ENCODE measurements at regions of chr13 and their contacts with region 1.

Region 1: DNA sequence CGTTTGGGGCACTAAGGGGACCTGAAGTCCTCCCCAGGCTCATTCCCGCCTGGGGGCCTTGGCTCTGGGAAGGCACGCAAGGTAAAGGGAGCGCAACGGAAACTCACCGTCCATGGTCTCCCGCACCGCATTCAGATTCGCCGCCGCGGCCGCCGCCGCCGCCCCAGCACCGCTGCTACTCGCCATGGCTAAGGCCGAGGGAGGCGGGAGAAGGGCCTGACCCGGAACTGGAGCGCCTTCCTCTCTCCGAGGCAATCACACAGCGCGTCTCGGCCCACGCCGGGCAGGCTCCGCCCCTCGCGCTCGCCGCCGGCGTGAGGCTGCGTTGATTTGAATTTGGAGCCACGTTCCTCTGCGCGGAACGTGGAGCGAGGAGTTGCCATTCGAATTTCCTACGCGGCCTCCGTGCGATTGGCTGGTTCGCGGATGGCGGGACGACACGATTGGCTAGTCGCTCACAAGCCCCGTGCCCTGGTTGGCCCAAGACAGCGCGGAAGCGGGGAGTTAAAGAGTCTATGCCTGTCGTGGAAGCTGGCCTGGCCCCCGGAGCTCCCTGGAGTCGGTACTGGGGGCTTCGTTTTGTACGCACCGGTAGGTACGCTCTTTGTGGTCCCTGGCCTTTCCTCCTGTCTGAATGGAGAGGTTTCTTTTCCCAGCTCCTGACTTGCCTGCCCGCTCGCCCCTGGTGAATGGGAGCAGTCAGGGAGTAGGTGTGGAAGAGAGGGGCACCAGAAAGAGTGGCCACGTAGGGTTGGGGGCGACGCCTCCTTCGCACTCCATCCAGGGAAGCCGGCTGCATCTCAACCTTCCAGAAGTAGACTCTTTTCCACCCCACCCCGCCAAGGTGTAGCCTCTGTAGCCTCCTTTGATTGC is at the starts of genes BORA and MZT1:
- DNase-seq: peak; percentile 92 to 95
- H3K4me3 ChIP-seq: peak within 1 kb of the TSS; percentile 96
- H3K27ac ChIP-seq: no peak within 1 kb of the TSS
- H3K4me1 ChIP-seq: peaks cover 22% of the 10 kb centered on the region
- H3K27me3 ChIP-seq: no peaks in the 10 kb centered on the region
- CTCF ChIP-seq: no peak
- total RNA-seq, gene BORA: 12.6 and 19.5 TPM in 2 replicates
- total RNA-seq, gene MZT1: 15.2 and 21.0 TPM in 2 replicates

Region 2: DNA sequence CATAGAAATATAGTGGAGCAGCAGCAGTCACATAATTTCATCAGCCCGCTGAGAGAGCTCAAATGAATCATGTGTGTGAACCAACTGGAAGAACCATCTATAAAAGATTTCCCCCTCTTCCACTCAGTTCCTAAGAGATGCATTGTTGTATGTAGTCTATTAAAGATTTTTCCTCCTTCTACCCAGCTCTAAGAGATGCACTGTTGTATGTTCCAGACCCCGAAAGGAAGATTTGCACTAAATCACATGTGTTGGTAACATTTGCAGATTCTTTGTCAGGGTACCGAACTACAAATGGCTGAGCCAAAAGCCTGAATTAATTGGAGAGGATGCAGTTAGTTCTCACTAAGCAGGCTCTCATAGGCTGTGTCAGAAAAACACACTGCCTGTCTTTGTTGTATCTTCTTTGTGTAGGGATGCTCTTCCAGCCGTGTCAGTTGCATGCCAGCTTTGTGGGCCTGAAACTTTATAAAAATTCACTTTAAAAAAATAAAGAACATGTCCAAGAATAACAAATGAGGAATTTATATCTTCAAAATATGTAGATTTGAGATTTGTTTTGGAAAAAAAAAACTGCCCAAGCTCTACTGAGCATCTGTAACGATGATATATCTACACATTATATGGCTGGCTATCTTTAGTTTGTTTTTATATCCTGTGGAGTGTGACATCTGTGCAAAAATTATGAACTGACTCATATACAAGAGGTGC is 223.4 kb before region 1 on chr13:
- CTCF ChIA-PET with region 1: no interaction called
- POLR2A ChIA-PET with region 1: interaction called, 10 read pairs
- intact Hi-C with region 1: no loop called
- DNase-seq: no peak
- H3K4me3 ChIP-seq: no peak overlapping the region
- H3K27ac ChIP-seq: no peak overlapping the region
- H3K4me1 ChIP-seq: no peaks in the 10 kb centered on the region
- H3K27me3 ChIP-seq: no peaks in the 10 kb centered on the region
- CTCF ChIP-seq: no peak

Region 3: GRCh38 chr13:72745260-72745659 is 17.6 kb after region 1 on chr13:
- CTCF ChIA-PET with region 1: no interaction called
- POLR2A ChIA-PET with region 1: no interaction called
- intact Hi-C with region 1: no loop called
- DNase-seq: no peak
- H3K4me3 ChIP-seq: no peak overlapping the region
- H3K27ac ChIP-seq: no peak overlapping the region
- H3K4me1 ChIP-seq: no peaks in the 10 kb centered on the region
- H3K27me3 ChIP-seq: no peaks in the 10 kb centered on the region
- CTCF ChIP-seq: no peak

Region 4: GRCh38 chr13:72763411-72763810 is 35.8 kb after region 1 on chr13:
- CTCF ChIA-PET with region 1: no interaction called
- POLR2A ChIA-PET with region 1: no interaction called
- intact Hi-C with region 1: no loop called
- DNase-seq: no peak
- H3K4me3 ChIP-seq: no peak overlapping the region
- H3K27ac ChIP-seq: no peak overlapping the region
- H3K4me1 ChIP-seq: no peaks in the 10 kb centered on the region
- H3K27me3 ChIP-seq: no peaks in the 10 kb centered on the region
- CTCF ChIP-seq: no peak

Region 5: DNA sequence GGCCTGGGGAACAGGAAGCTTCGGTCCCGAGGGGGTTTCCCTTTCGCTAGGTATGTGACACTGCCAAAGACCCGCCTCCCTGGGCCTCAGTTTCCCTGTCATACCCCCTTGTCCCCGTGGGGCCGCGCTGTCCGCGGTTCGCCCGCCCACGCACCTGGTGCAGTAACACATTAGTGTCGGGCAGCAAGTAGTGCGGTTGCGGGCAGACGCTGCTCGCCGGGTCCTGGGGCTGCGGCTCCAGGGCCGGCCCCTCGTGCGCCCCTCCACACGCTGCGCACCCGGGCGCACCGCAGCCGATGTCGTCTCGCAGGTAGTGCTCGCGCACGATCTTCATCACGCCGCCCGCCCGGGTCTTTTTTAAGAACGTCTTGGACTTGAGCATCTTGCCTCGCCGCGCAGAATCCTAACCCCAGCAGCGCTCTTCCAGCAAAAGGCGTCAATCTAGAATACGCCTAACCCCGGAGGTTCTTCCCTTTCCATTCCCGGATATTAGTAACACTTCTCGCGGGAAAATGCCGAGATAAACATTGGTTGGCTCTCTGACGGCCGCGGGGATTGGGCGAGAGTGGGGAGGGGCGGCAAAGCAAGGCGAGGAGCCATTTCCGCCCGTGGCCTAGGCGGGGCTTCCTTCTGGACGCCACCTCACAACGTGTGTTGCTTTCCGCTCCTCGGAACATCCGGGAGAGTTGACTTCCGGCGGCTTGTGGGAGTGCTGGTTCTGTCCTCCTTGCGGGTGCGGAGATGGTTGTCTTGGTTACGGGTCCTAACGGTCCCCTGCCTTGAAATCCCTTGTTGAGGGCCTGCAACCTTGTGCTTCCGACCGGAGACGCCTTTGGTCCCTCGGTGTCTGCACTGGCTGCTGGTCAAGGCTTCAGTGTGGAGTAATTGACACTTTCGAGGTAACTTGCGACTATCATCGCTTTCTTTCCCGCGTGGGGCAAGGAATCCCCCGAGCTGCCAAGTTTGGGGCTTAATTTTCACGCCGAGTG is 54.1 kb after region 1 on chr13 and contains the starts of genes DIS3 and PIBF1:
- CTCF ChIA-PET with region 1: no interaction called
- POLR2A ChIA-PET with region 1: no interaction called
- intact Hi-C with region 1: loop called (anchors 2 kb)
- DNase-seq: peak; percentile 96
- H3K4me3 ChIP-seq: peak within 1 kb of the TSS; percentile 92
- H3K27ac ChIP-seq: peak within 1 kb of the TSS; percentile 55
- H3K4me1 ChIP-seq: peaks cover 26% of the 10 kb centered on the region
- H3K27me3 ChIP-seq: no peaks in the 10 kb centered on the region
- CTCF ChIP-seq: no peak
- total RNA-seq, gene DIS3: 23.6 and 27.2 TPM in 2 replicates
- total RNA-seq, gene PIBF1: 15.0 and 20.3 TPM in 2 replicates

Measured in PC-9 (cell line).